Heart right ventricle (tissue), 16 donors: ENCODE measurements at regions of chr2 and their contacts with region 1.

Region 1: DNA sequence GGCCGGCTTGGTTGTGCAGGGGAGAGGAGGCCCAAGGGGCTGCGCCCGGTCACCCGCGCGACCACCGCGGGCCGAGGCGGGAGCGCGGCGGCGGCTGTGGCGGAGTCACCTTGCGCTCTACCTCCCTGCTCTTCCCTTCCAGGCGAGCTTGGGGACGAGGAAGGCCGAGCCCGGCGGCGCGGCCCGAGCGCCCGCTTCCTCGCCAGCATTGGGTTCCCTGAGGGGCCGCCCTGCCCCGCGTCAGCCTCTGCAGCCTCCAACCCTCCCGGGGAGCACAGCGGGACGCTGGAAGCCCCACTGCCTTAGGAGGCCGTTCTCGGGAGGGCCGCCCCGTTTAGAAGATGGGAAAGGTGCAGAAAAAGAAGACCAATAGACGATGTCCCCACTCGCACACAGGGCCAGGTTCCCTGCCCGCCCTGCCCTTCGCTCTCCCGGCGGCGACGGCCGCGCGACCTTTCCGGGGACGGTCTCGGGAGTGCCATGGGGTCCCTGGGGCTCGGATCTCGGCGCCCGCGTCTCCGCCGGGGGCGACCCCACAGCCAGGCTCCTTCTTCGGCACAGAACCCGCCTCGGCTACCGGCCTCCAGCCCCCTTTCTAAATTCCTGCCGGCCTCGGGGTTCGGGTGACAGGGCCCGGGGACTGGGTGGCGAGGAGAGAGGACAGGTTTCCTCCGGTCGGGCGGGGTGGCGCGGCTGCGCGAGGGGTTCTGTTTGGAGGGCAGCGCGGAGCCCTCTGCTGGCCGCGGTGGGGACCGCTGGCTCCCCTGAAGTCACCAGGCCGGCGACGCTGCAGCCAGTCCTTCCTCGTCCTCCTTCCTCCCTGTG is 85.5 kb downstream of the HS6ST1 start:
- DNase-seq: peak; percentile 89 to 91
- ATAC-seq: peak; percentile 95 to 98 (median 97)
- H3K4me3 ChIP-seq: peak overlapping the region; percentile 56 to 89 (median 68)
- H3K27ac ChIP-seq: peak overlapping the region; percentile 80 to 96 (median 87)
- H3K4me1 ChIP-seq: peaks cover 0 to 20% (median 5%) of the 10 kb centered on the region in 9 donors
- H3K27me3 ChIP-seq: peaks cover 0 to 14% (median 0%) of the 10 kb centered on the region in 7 donors
- CTCF ChIP-seq: peak; percentile 85 to 96 (median 93)

Region 2: GRCh38 chr2:128178650-128179460 is 54.3 kb before region 1 on chr2:
- intact Hi-C with region 1: loop called in 6 of 10 experiments (anchors 2 to 10 kb)
- DNase-seq: peak; percentile 32 to 70
- ATAC-seq: peak; percentile 76 to 98 (median 94)
- H3K4me3 ChIP-seq: no peak overlapping the region
- H3K27ac ChIP-seq: peak overlapping the region; percentile 52 to 84 (median 68)
- H3K4me1 ChIP-seq: peaks cover 0 to 23% (median 11%) of the 10 kb centered on the region in 9 donors
- H3K27me3 ChIP-seq: no peaks in the 10 kb centered on the region
- CTCF ChIP-seq: peak; percentile 25 to 80 (median 72)

Region 3: GRCh38 chr2:128187032-128187654 is 46.0 kb before region 1 on chr2:
- intact Hi-C with region 1: loop called in 2 of 10 experiments (anchors 5 kb)
- DNase-seq: no peak
- ATAC-seq: peak in 6 of 8 donors; percentile 48 to 75 (median 60)
- H3K4me3 ChIP-seq: peak overlapping the region in 5 of 10 donors; percentile 2 to 18 (median 13)
- H3K27ac ChIP-seq: peak overlapping the region in 9 of 10 donors; percentile 25 to 77 (median 37)
- H3K4me1 ChIP-seq: peaks cover 0 to 18% (median 5%) of the 10 kb centered on the region in 9 donors
- H3K27me3 ChIP-seq: no peaks in the 10 kb centered on the region
- CTCF ChIP-seq: no peak

Region 4: GRCh38 chr2:128196471-128196931 is 36.7 kb before region 1 on chr2:
- intact Hi-C with region 1: loop called in 2 of 10 experiments (anchors 5 kb)
- DNase-seq: no peak
- ATAC-seq: peak in 6 of 8 donors; percentile 46 to 86 (median 62)
- H3K4me3 ChIP-seq: no peak overlapping the region
- H3K27ac ChIP-seq: peak overlapping the region in 2 of 10 donors; percentile 13 to 20
- H3K4me1 ChIP-seq: peaks cover 3 to 33% (median 21%) of the 10 kb centered on the region in 9 donors
- H3K27me3 ChIP-seq: no peaks in the 10 kb centered on the region
- CTCF ChIP-seq: peak in 2 of 9 donors; percentile 13 to 21

Region 5: GRCh38 chr2:128280158-128280871 is 47.1 kb after region 1 on chr2:
- intact Hi-C with region 1: loop called in 1 of 10 experiments (anchors 10 kb)
- DNase-seq: peak in 1 of 2 donors; percentile 36
- ATAC-seq: peak in 5 of 8 donors; percentile 15 to 57 (median 24)
- H3K4me3 ChIP-seq: no peak overlapping the region
- H3K27ac ChIP-seq: peak overlapping the region in 5 of 10 donors; percentile 10 to 58 (median 41)
- H3K4me1 ChIP-seq: peaks cover 21 to 56% (median 39%) of the 10 kb centered on the region in 9 donors
- H3K27me3 ChIP-seq: no peaks in the 10 kb centered on the region
- CTCF ChIP-seq: no peak

Region 6: GRCh38 chr2:128305159-128306087 is 72.2 kb after region 1 on chr2:
- intact Hi-C with region 1: loop called in 2 of 10 experiments (anchors 10 kb)
- DNase-seq: peak; percentile 53 to 87
- ATAC-seq: peak; percentile 53 to 80 (median 70)
- H3K4me3 ChIP-seq: no peak overlapping the region
- H3K27ac ChIP-seq: peak overlapping the region; percentile 20 to 84 (median 73)
- H3K4me1 ChIP-seq: peaks cover 30 to 66% (median 57%) of the 10 kb centered on the region in 9 donors
- H3K27me3 ChIP-seq: no peaks in the 10 kb centered on the region
- CTCF ChIP-seq: peak in 2 of 9 donors; percentile 19 to 38

Region 7: DNA sequence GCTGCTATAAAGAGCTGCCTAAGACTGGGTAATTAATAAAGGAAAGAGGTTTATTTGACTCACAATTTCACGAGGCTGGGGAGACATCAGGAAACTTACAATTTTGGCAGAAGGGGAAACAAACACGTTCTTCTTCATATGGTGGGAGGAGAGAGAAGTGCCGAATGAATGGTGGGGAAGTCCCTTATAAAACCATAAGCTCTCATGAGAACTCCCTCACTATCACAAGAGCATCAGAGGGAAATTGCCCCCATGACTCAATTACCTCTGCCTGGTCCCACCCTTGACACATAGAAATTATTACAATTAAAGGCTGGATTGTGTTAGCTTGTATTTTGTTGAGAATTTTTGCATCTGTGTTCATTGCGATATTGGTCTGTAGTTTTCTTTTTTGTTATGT is 1285.8 kb after region 1 on chr2:
- intact Hi-C with region 1: no loop called
- DNase-seq: no peak
- ATAC-seq: no peak
- H3K4me3 ChIP-seq: no peak overlapping the region
- H3K27ac ChIP-seq: no peak overlapping the region
- H3K4me1 ChIP-seq: no peaks in the 10 kb centered on the region
- H3K27me3 ChIP-seq: peaks cover 0 to 2% (median 0%) of the 10 kb centered on the region in 7 donors
- CTCF ChIP-seq: no peak